ENCODE measurements at regions of chr11 and their contacts with region 1.

Region 1: DNA sequence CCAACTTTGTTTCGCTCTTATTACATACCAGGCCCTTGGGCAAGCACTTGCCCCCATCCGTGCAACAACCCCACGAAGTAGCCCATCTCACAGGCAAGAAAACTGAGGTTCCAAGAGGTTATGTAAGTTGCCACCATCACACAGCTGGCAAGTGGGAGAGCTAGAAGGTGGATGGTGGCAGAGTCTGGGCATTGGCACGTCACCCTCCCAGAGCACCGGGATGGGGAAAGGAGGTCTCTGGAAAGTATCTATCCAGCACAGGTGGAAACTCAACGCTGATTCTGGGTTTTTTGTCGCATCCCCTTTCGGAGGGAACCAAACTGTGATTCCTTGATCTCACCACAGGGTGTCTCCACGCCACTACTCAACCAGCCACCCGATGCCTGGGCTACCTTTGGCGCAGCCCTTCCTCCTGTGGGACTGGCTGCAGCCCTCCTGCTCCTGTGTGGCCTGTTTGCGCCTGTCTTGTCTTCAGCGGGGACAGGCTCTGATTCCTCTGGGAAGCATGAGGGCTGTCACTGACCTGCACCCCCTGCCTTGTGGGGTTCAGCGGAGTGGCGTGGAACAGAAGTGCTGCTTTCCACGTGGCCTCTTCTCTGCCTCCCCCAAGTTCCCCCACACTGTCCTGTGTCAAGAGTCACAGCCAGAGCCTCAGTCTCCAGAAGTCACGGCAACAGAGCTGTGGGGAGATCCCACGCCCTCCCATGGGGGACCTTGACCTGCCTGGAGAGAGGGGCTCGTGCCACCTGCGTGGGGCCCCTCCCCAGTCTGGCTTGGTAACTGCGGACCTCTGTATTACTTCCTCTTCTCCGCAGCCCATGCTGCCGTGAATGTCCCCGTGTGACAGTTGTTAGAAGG is 34.4 kb upstream of the TRIM29 start:
- DNase-seq: peak; percentile 69
- ATAC-seq: peak; percentile 60 to 66
- H3K4me3 ChIP-seq: no peak overlapping the region
- H3K27ac ChIP-seq: no peak overlapping the region
- H3K4me1 ChIP-seq: peaks cover 18% of the 10 kb centered on the region
- H3K27me3 ChIP-seq: peaks cover 57% of the 10 kb centered on the region
- CTCF ChIP-seq: peak; percentile 76

Region 2: DNA sequence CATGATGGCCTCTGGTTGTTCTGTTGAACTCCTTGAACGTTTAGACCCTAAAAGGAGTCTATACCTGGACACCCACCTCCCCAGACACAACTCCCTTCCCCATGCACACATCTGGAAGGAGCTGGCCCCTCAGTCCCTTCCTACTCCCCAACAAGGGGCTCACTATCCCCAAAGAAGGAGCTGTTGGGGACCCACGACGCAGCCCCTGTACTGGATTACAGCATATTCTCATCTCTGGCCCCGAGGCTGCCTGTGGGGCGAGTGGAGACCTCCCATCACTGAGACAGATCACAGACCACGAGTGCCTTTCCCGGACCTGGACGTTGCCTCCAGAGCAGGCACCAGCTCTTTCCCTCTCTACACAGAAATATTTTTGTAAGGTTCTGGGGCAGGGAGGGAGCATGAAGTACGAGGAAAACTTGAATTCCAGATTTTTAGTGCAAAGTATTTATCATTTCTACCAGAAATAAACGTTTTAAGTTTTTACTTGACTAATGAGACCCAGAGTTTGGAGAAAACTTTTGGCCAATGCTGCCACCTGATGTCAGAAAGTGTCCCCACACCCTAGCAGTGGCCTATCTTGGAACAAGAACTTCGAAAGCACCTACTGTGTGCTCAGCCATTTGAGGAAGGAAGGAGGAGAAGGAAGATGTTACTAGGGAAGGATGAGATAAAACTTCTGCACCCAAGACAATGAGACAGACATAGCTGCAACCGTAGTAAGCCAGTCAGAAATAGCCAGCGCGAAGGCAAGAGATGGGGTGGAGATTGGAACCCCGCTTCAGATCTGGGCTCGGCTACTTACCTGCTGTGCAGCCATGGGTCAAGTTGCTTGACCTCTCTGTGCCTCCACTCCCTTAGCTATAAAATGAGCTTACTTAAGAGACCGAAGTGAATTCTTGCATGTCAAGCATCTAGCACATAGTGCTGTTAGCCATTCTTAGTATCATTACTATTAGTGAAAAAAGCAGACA is 57.5 kb after region 1 on chr11:
- intact Hi-C with region 1: loop called (anchors 10 kb)
- DNase-seq: no peak
- ATAC-seq: peak in 1 of 2 donors; percentile 32
- H3K4me3 ChIP-seq: no peak overlapping the region
- H3K27ac ChIP-seq: no peak overlapping the region
- H3K4me1 ChIP-seq: peaks cover 13% of the 10 kb centered on the region
- H3K27me3 ChIP-seq: peaks cover 11% of the 10 kb centered on the region
- CTCF ChIP-seq: peak; percentile 64